ENCODE measurements at regions of chr13 and their contacts with region 1.

Region 1: GRCh38 chr13:44306401-44307192 is 67.0 kb upstream of the SERP2 start:
- DNase-seq: peak; percentile 62 to 86 (median 77)
- ATAC-seq: peak; percentile 34 to 84 (median 61)
- H3K4me3 ChIP-seq: peak overlapping the region in 3 of 12 donors; percentile 3 to 20 (median 16)
- H3K27ac ChIP-seq: peak overlapping the region; percentile 69 to 96 (median 88)
- H3K4me1 ChIP-seq: peaks cover 18 to 81% (median 57%) of the 10 kb centered on the region in 12 donors
- H3K27me3 ChIP-seq: no peaks in the 10 kb centered on the region
- CTCF ChIP-seq: no peak
- POLR2A ChIP-seq: no peak

Region 2: GRCh38 chr13:44243198-44243857 is 63.3 kb before region 1 on chr13:
- intact Hi-C with region 1: loop called in 6 of 10 experiments (anchors 5 kb)
- DNase-seq: peak in 3 of 5 donors; percentile 46 to 52 (median 47)
- ATAC-seq: peak; percentile 39 to 92 (median 70)
- H3K4me3 ChIP-seq: no peak overlapping the region
- H3K27ac ChIP-seq: peak overlapping the region in 8 of 12 donors; percentile 6 to 65 (median 43)
- H3K4me1 ChIP-seq: peaks cover 0 to 18% (median 5%) of the 10 kb centered on the region in 12 donors
- H3K27me3 ChIP-seq: no peaks in the 10 kb centered on the region
- CTCF ChIP-seq: peak; percentile 25 to 62 (median 46)
- POLR2A ChIP-seq: no peak

Region 3: GRCh38 chr13:44274452-44275205 is 32.0 kb before region 1 on chr13:
- intact Hi-C with region 1: loop called in 1 of 10 experiments (anchors 5 kb)
- DNase-seq: peak in 1 of 5 donors; percentile 28
- ATAC-seq: peak; percentile 61 to 87 (median 70)
- H3K4me3 ChIP-seq: peak overlapping the region in 7 of 12 donors; percentile 4 to 41 (median 7)
- H3K27ac ChIP-seq: peak overlapping the region; percentile 45 to 89 (median 76)
- H3K4me1 ChIP-seq: peaks cover 2 to 58% (median 37%) of the 10 kb centered on the region in 12 donors
- H3K27me3 ChIP-seq: no peaks in the 10 kb centered on the region
- CTCF ChIP-seq: no peak
- POLR2A ChIP-seq: no peak

Measured in heart left ventricle (tissue), 16 donors.